ENCODE measurements at regions of chr10 and their contacts with region 1.

Region 1: DNA sequence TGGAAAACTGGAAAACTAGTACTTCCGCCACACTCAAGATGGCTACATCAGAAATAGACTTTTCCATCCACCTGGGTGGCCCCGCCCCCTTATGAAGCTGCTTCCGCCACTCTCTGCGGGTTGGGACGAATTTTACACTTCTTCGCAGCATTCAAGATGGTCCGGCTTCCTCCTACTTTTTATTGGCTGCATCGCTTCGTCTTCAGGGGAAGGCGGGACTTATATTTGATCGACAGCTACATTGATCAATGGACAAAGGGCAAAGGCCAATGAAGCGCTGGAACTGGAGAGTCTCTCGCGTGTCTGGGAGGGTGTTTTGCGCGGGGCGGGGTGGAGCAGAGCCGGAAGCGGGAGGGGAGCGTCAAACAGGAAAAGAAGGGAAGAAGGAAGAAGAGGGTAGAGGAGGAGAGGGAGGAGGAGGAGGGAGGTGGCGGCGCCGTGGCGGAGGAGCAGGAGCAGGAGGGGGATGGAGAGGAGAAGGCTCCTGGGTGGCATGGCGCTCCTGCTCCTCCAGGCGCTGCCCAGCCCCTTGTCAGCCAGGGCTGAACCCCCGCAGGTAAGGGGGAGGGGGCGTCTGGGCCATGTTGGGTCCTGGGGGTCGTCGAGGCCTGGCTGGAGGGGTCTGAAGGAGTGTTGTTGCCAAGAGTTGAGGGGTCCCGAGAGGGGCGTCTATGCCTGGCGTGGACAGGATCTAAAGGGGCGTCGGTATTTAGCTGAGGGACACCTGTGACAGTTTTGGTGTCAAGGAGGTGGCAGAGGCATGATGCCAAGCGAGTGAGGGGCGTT is at the start of gene WBP1L:
- DNase-seq: peak; percentile 88 to 99 (median 94)
- ATAC-seq: peak; percentile 97
- H3K4me3 ChIP-seq: peak within 1 kb of the TSS; percentile 99
- H3K4me3 Mint-ChIP-seq: peak within 1 kb of the TSS; percentile 94
- H3K27ac ChIP-seq: peak within 1 kb of the TSS; percentile 73 to 78
- H3K27ac Mint-ChIP-seq: peak within 1 kb of the TSS; percentile 86
- H3K4me1 ChIP-seq: peaks cover 27% of the 10 kb centered on the region
- H3K4me1 Mint-ChIP-seq: peaks cover 51% of the 10 kb centered on the region
- H3K27me3 ChIP-seq: no peaks in the 10 kb centered on the region
- H3K27me3 Mint-ChIP-seq: no peaks in the 10 kb centered on the region
- CTCF ChIP-seq: no peak
- total RNA-seq, gene WBP1L: 6.1 to 6.5 TPM

Region 2: GRCh38 chr10:102064868-102065560 is 678.8 kb before region 1 on chr10 and contains the start of gene HPS6:
- CTCF ChIA-PET with region 1: no interaction called
- POLR2A ChIA-PET with region 1: no interaction called
- intact Hi-C with region 1: loop called in 1 of 2 experiments (anchors 10 kb)
- DNase-seq: peak; percentile 70 to 95 (median 88)
- ATAC-seq: peak; percentile 96
- H3K4me3 ChIP-seq: peak within 1 kb of the TSS; percentile 60
- H3K4me3 Mint-ChIP-seq: peak within 1 kb of the TSS; percentile 92
- H3K27ac ChIP-seq: peak within 1 kb of the TSS; percentile 77 to 82
- H3K27ac Mint-ChIP-seq: peak within 1 kb of the TSS; percentile 89
- H3K4me1 ChIP-seq: peaks cover 39% of the 10 kb centered on the region
- H3K4me1 Mint-ChIP-seq: peaks cover 23% of the 10 kb centered on the region
- H3K27me3 ChIP-seq: no peaks in the 10 kb centered on the region
- H3K27me3 Mint-ChIP-seq: no peaks in the 10 kb centered on the region
- CTCF ChIP-seq: no peak
- total RNA-seq, gene HPS6: 12.8 to 15.0 TPM

Region 3: DNA sequence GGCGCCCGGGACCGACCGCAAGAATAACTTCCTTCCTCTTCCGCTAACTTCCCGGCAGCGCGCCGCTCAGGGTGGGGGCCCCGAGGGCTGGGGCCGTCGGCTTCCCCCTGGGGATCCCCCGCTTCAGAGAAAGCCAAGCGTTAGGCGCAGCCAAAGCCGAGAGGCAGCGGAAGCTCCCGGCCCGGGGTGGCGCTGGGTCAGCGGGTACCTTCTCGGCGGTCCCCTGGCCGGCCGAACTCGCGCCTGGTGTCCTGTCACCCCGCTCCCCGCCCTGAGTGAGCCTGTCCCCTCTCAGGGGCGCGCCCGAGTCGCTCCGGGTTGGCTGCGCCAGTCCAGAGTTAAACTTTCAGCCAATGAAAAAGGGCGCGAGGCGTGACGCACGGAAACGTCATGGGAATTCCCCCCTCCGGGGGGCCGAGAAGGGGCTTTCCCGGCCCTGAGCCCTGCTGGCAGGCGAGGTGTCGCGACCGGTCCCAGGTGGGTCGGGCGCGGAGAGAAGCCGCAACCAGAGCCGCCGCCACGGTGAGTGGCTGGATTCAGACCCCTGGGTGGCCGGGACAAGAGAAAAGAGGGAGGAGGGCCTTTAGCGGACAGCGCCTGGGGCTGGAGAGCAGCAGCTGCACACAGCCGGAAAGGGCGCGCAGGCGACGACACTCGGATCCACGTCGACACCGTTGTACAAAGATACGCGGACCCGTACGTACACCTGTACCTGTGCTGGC is 349.5 kb before region 1 on chr10:
- CTCF ChIA-PET with region 1: interaction called, 4 read pairs
- POLR2A ChIA-PET with region 1: interaction called, 5 read pairs
- intact Hi-C with region 1: loop called in 1 of 2 experiments (anchors 10 kb)
- DNase-seq: peak; percentile 95 to 99 (median 98)
- ATAC-seq: peak; percentile 72
- H3K4me3 ChIP-seq: peak overlapping the region; percentile 64
- H3K4me3 Mint-ChIP-seq: peak overlapping the region; percentile 92
- H3K27ac ChIP-seq: peak overlapping the region; percentile 97 to 100
- H3K27ac Mint-ChIP-seq: peak overlapping the region; percentile 100
- H3K4me1 ChIP-seq: peaks cover 57% of the 10 kb centered on the region
- H3K4me1 Mint-ChIP-seq: peaks cover 47% of the 10 kb centered on the region
- H3K27me3 ChIP-seq: no peaks in the 10 kb centered on the region
- H3K27me3 Mint-ChIP-seq: no peaks in the 10 kb centered on the region
- CTCF ChIP-seq: peak; percentile 12

Region 4: GRCh38 chr10:102604379-102604960 is 139.3 kb before region 1 on chr10:
- CTCF ChIA-PET with region 1: no interaction called
- POLR2A ChIA-PET with region 1: no interaction called
- intact Hi-C with region 1: no loop called
- DNase-seq: no peak
- ATAC-seq: no peak
- H3K4me3 ChIP-seq: no peak overlapping the region
- H3K4me3 Mint-ChIP-seq: no peak overlapping the region
- H3K27ac ChIP-seq: no peak overlapping the region
- H3K27ac Mint-ChIP-seq: no peak overlapping the region
- H3K4me1 ChIP-seq: no peaks in the 10 kb centered on the region
- H3K4me1 Mint-ChIP-seq: no peaks in the 10 kb centered on the region
- H3K27me3 ChIP-seq: no peaks in the 10 kb centered on the region
- H3K27me3 Mint-ChIP-seq: no peaks in the 10 kb centered on the region
- CTCF ChIP-seq: no peak

Region 5: DNA sequence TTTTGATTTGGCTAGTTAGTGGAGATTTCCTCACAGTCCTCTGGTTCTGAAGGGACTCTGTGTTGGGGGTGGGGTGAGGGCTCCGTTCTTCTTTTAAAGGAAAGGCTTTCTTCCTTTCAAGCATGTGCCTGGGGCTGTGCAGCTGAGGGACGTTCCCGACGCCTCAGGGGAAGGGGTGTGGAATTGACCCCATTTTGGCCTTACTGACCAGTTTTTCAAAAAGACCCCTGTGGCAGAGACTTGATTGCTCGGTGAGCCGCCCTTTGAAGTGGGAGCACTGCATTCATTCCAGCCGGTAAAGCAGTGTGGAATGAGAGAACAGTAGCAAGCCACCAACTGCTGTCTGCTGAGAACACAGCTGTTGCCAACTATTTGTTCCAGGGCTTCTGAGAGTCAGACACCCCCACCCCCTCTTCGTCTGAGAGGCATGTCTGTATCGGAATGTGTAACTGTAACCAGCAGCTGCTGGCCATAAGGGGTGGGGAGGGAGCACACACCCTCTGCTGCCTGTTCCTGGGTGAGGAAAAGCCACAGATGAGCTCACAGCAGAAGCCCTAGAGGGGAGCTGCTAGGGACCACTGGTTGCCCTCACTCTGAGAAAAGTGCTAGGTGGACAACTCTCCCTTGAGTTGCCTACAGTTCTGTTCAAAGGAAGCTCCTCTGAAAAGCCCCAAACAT is 33.1 kb after region 1 on chr10:
- CTCF ChIA-PET with region 1: no interaction called
- POLR2A ChIA-PET with region 1: interaction called, 8 read pairs
- intact Hi-C with region 1: loop called in 1 of 2 experiments (anchors 5 kb)
- DNase-seq: peak in 6 of 14 experiments; percentile 7 to 64 (median 24)
- ATAC-seq: peak; percentile 52
- H3K4me3 ChIP-seq: no peak overlapping the region
- H3K4me3 Mint-ChIP-seq: peak overlapping the region; percentile 11
- H3K27ac ChIP-seq: no peak overlapping the region
- H3K27ac Mint-ChIP-seq: peak overlapping the region; percentile 78
- H3K4me1 ChIP-seq: peaks cover 47% of the 10 kb centered on the region
- H3K4me1 Mint-ChIP-seq: peaks cover 71% of the 10 kb centered on the region
- H3K27me3 ChIP-seq: no peaks in the 10 kb centered on the region
- H3K27me3 Mint-ChIP-seq: no peaks in the 10 kb centered on the region
- CTCF ChIP-seq: no peak

Region 6: GRCh38 chr10:103192451-103193106 is 448.8 kb after region 1 on chr10:
- CTCF ChIA-PET with region 1: no interaction called
- POLR2A ChIA-PET with region 1: no interaction called
- intact Hi-C with region 1: loop called in 1 of 2 experiments (anchors 10 kb)
- DNase-seq: peak; percentile 24 to 78 (median 40)
- ATAC-seq: peak; percentile 68
- H3K4me3 ChIP-seq: peak overlapping the region; percentile 79
- H3K4me3 Mint-ChIP-seq: peak overlapping the region; percentile 99
- H3K27ac ChIP-seq: peak overlapping the region; percentile 75 to 78
- H3K27ac Mint-ChIP-seq: peak overlapping the region; percentile 86
- H3K4me1 ChIP-seq: peaks cover 20% of the 10 kb centered on the region
- H3K4me1 Mint-ChIP-seq: peaks cover 49% of the 10 kb centered on the region
- H3K27me3 ChIP-seq: no peaks in the 10 kb centered on the region
- H3K27me3 Mint-ChIP-seq: no peaks in the 10 kb centered on the region
- CTCF ChIP-seq: no peak

Measured in CD4-positive, alpha-beta T cell (primary cell).